ENCODE measurements at regions of chr19 and their contacts with region 1.

Region 1: GRCh38 chr19:19404879-19405860 is at the start of gene GATAD2A:
- DNase-seq: peak; percentile 85 to 93
- H3K4me3 ChIP-seq: peak within 1 kb of the TSS; percentile 89
- H3K4me3 Mint-ChIP-seq: peak within 1 kb of the TSS; percentile 95
- H3K27ac Mint-ChIP-seq: peak within 1 kb of the TSS; percentile 93
- H3K4me1 ChIP-seq: peaks cover 34% of the 10 kb centered on the region
- H3K4me1 Mint-ChIP-seq: peaks cover 20% of the 10 kb centered on the region
- H3K27me3 ChIP-seq: no peaks in the 10 kb centered on the region
- H3K27me3 Mint-ChIP-seq: no peaks in the 10 kb centered on the region
- CTCF ChIP-seq: peak in 1 of 2 experiments; percentile 44
- total RNA-seq, gene GATAD2A: 118 and 126 TPM in 2 replicates

Region 2: DNA sequence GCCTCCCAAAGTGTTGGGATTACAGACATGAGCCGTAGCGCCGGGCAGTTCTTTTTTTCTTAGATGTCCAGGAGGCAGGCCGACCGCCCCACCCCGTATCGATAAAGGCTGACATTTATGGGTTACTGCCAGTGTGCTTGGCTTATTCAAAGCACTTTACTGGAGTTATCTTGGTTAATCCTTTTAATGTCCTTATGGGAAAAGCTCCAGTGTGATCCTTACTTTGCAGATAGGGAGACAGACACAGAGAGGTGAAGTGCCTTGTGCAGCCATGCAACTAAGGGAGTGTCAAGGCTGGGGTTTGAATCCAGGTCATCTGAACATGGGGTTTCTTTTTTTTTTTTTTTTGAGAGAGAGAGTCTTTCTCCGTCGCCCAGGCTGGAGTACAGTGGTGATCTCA is 174.2 kb before region 1 on chr19:
- CTCF ChIA-PET with region 1: no interaction called
- POLR2A ChIA-PET with region 1: interaction called, 15 read pairs
- intact Hi-C with region 1: no loop called
- DNase-seq: no peak
- H3K4me3 ChIP-seq: no peak overlapping the region
- H3K4me3 Mint-ChIP-seq: no peak overlapping the region
- H3K27ac Mint-ChIP-seq: no peak overlapping the region
- H3K4me1 ChIP-seq: no peaks in the 10 kb centered on the region
- H3K4me1 Mint-ChIP-seq: no peaks in the 10 kb centered on the region
- H3K27me3 ChIP-seq: no peaks in the 10 kb centered on the region
- H3K27me3 Mint-ChIP-seq: peaks cover 13% of the 10 kb centered on the region
- CTCF ChIP-seq: no peak

Region 3: GRCh38 chr19:19320362-19321142 is 84.6 kb before region 1 on chr19 and contains the starts of genes MAU2 and SUGP1:
- CTCF ChIA-PET with region 1: no interaction called
- POLR2A ChIA-PET with region 1: no interaction called
- intact Hi-C with region 1: loop called (anchors 1 kb)
- DNase-seq: peak; percentile 91 to 92
- H3K4me3 ChIP-seq: peak within 1 kb of the TSS; percentile 100
- H3K4me3 Mint-ChIP-seq: peak within 1 kb of the TSS; percentile 77
- H3K27ac Mint-ChIP-seq: peak within 1 kb of the TSS; percentile 91
- H3K4me1 ChIP-seq: no peaks in the 10 kb centered on the region; the same call in 1 of the 2 replicates
- H3K4me1 Mint-ChIP-seq: peaks cover under 1% of the 10 kb centered on the region
- H3K27me3 ChIP-seq: no peaks in the 10 kb centered on the region
- H3K27me3 Mint-ChIP-seq: no peaks in the 10 kb centered on the region
- CTCF ChIP-seq: no peak
- total RNA-seq, gene MAU2: 51.3 and 62.6 TPM in 2 replicates
- total RNA-seq, gene SUGP1: 51.2 and 58.4 TPM in 2 replicates

Region 4: DNA sequence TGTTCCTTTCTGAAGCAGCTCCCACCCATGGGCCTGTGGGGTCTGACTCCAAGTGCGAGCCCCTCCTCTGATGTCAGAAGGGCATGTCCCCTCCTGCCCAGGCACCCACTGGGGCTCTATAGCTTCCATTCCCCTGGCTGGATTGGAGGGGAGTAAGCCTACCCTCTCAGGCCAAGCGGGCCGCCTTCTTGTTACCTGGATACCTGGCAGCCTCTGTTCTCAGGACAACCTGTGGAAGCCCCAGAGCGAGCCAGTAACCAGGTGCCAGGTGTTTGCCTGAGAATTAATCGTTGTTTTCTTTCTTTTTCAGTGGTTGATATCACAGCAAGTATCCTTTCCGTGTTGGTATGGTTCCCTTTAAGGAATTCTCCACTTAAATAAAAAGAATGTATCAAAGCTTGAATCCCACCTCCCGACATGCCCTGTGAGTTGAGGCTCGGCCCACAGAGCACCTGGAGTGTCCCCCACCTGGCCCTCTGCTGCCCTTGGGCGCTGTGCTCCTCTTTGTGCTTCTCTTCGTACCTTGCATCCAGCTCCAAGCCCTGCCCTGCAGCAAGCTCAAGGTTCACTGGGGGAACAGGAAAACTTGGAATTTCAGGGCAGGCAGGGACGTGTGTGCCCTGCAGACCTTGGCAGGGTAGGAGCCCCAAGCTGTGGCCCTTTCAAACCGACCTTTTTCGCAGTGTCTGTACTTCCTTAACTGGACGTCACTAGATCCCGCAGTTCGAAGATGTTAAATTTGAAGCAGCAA is 69.6 kb before region 1 on chr19:
- CTCF ChIA-PET with region 1: no interaction called
- POLR2A ChIA-PET with region 1: no interaction called
- intact Hi-C with region 1: no loop called
- DNase-seq: no peak
- H3K4me3 ChIP-seq: no peak overlapping the region
- H3K4me3 Mint-ChIP-seq: no peak overlapping the region
- H3K27ac Mint-ChIP-seq: no peak overlapping the region
- H3K4me1 ChIP-seq: no peaks in the 10 kb centered on the region
- H3K4me1 Mint-ChIP-seq: no peaks in the 10 kb centered on the region
- H3K27me3 ChIP-seq: no peaks in the 10 kb centered on the region
- H3K27me3 Mint-ChIP-seq: no peaks in the 10 kb centered on the region
- CTCF ChIP-seq: no peak

Region 5: GRCh38 chr19:19361075-19361594 is 44.0 kb before region 1 on chr19:
- CTCF ChIA-PET with region 1: interaction called, 7 read pairs
- POLR2A ChIA-PET with region 1: interaction called, 10 read pairs
- intact Hi-C with region 1: no loop called
- DNase-seq: peak; percentile 77 to 82
- H3K4me3 ChIP-seq: no peak overlapping the region
- H3K4me3 Mint-ChIP-seq: no peak overlapping the region
- H3K27ac Mint-ChIP-seq: no peak overlapping the region
- H3K4me1 ChIP-seq: no peaks in the 10 kb centered on the region
- H3K4me1 Mint-ChIP-seq: peaks cover 7% of the 10 kb centered on the region
- H3K27me3 ChIP-seq: no peaks in the 10 kb centered on the region; the same call in 1 of the 2 replicates
- H3K27me3 Mint-ChIP-seq: no peaks in the 10 kb centered on the region
- CTCF ChIP-seq: peak; percentile 69 to 73

Region 6: DNA sequence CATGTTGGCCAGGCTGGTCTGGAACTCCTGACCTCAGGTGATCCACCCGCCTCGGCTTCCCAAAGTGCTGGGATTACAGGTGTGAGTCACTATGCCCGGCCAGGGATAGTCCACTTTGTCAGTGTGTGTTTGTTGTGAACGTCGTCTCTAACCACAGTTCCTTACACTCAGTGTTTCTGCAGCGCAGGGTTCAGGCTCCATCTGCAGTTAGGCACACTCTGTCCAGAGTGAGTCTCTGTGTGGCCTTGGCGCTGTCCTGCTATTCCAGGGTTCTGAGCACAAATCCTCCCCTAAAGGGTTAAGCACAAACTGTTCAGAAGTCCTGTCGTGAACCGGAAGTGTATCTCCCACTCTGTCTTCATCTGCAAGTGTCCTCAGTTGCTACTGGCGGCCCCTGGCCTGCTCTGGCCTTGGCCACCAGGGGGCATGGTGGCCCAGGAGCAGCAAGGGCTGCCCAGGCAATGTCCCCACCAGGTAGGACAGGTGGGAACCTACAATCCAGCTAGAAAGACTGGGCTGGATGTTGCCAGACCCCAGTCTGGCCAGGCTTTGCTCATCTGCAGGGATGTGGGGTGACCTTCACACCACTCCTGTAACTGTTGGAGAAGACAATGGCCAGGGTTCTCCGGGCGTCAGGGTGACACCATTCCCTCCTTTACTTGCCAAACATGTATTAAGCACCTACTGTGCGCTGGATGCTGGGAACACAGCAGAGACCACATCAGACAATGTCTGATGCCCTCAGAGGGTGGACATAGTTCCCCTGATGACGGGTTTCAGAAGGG is 38.4 kb before region 1 on chr19:
- CTCF ChIA-PET with region 1: interaction called, 7 read pairs
- POLR2A ChIA-PET with region 1: interaction called, 10 read pairs
- intact Hi-C with region 1: loop called (anchors 1 kb)
- DNase-seq: peak; percentile 90 to 93
- H3K4me3 ChIP-seq: no peak overlapping the region
- H3K4me3 Mint-ChIP-seq: no peak overlapping the region
- H3K27ac Mint-ChIP-seq: peak overlapping the region; percentile 55
- H3K4me1 ChIP-seq: peaks cover 7% of the 10 kb centered on the region
- H3K4me1 Mint-ChIP-seq: peaks cover 7% of the 10 kb centered on the region
- H3K27me3 ChIP-seq: no peaks in the 10 kb centered on the region; the same call in 1 of the 2 replicates
- H3K27me3 Mint-ChIP-seq: no peaks in the 10 kb centered on the region
- CTCF ChIP-seq: peak; percentile 80 to 94

Region 7: DNA sequence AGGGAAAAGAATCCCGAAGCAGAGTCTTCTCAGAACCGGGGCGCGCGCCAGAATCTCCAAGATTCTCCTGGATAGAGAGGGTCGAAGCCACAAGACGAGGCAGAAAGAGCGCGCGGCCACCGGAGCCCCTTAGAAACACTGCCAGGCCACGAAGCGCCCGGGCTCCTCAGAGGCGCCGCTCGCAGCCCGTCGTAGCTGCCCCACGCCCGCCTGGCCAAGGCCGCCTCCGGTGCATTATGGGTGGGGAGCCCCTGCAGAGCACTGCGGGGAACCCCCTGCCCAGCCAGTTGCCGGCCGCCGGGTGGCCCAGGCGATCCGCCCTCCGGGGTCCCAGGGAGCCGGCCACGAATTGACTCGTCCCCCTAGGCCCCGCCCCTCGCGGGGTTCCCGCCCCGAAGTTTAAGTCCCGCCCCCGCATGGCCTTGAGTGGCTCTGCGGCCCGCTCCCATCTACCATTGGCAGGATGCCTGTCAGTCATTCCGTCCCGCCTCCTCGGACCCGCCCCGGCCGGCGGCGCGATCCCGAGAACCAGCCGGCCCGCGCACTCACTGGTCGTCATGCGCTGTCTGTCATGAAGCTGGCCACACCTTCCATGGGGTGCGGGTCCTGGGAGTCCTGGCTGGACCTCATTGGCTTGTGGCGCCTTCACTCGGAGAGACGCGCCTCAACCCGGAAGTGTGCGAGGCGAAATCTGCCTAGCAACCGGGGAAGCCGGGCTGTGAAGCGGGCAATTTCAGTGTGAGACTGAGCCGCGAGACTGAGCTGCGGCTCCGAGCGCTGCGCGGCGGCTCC is 19.9 kb before region 1 on chr19:
- CTCF ChIA-PET with region 1: interaction called, 6 read pairs
- POLR2A ChIA-PET with region 1: interaction called, 33 read pairs
- intact Hi-C with region 1: loop called (anchors 1 kb)
- DNase-seq: peak; percentile 99 to 100
- H3K4me3 ChIP-seq: peak overlapping the region; percentile 88
- H3K4me3 Mint-ChIP-seq: peak overlapping the region; percentile 94
- H3K27ac Mint-ChIP-seq: peak overlapping the region; percentile 99
- H3K4me1 ChIP-seq: peaks cover 6% of the 10 kb centered on the region; the same call in 1 of the 2 replicates
- H3K4me1 Mint-ChIP-seq: peaks cover 6% of the 10 kb centered on the region
- H3K27me3 ChIP-seq: no peaks in the 10 kb centered on the region
- H3K27me3 Mint-ChIP-seq: no peaks in the 10 kb centered on the region
- CTCF ChIP-seq: peak in 1 of 2 experiments; percentile 23

Region 8: GRCh38 chr19:19554074-19555023 is 149.2 kb after region 1 on chr19:
- CTCF ChIA-PET with region 1: no interaction called
- POLR2A ChIA-PET with region 1: no interaction called
- intact Hi-C with region 1: no loop called
- DNase-seq: peak in 1 of 2 experiments; percentile 64
- H3K4me3 ChIP-seq: no peak overlapping the region
- H3K4me3 Mint-ChIP-seq: no peak overlapping the region
- H3K27ac Mint-ChIP-seq: no peak overlapping the region
- H3K4me1 ChIP-seq: no peaks in the 10 kb centered on the region
- H3K4me1 Mint-ChIP-seq: no peaks in the 10 kb centered on the region
- H3K27me3 ChIP-seq: no peaks in the 10 kb centered on the region
- H3K27me3 Mint-ChIP-seq: no peaks in the 10 kb centered on the region
- CTCF ChIP-seq: peak; percentile 53 to 69

Measured in Caco-2 (cell line).